ENCODE measurements at regions of chr16 and their contacts with region 1.

Region 1: DNA sequence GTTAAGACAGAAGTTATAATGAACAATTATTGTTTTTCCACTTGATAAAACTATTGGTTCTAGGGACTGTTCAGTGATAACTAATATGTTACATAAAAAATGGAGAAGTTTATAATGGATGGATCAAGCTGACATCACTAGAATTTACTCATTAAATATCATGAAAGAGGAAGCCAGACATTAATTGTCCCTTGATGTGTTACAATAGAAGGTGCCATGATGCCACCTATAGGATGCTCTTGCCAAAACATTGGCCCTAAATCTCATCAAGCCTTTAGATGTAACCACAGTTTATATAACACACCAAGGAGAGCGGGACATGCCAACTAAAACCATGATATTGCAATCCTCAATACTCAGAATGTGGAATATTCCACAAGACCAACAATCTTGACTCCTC is 147.9 kb upstream of the MON1B start:
- DNase-seq: no peak
- H3K4me3 Mint-ChIP-seq: no peak overlapping the region
- H3K27ac Mint-ChIP-seq: no peak overlapping the region
- H3K4me1 Mint-ChIP-seq: no peaks in the 10 kb centered on the region
- H3K27me3 Mint-ChIP-seq: peaks cover 9% of the 10 kb centered on the region

Region 2: GRCh38 chr16:75789237-75789636 is 1253.8 kb before region 1 on chr16:
- CTCF ChIA-PET with region 1: no interaction called
- intact Hi-C with region 1: loop called (anchors 1 kb)
- DNase-seq: no peak
- H3K4me3 Mint-ChIP-seq: no peak overlapping the region
- H3K27ac Mint-ChIP-seq: no peak overlapping the region
- H3K4me1 Mint-ChIP-seq: no peaks in the 10 kb centered on the region
- H3K27me3 Mint-ChIP-seq: peaks cover 3% of the 10 kb centered on the region

Region 3: DNA sequence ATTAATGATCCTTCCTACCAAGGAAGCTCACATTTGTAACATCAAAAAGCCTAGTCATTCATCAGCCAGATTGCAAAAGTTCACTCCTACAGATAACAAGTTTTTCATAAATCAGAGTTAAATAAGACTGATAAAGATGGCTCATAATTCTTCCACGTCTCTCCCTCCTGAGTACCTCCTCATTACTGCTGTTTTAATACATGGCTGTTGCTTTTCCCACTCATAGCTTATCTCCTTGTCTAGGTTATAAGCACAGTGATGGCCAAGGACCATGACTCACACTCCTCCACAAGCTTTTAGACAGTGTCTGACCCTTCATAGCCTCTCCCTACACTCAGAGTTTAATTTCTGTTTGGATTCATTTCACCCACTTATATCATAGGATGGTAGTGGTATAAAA is 47.0 kb after region 1 on chr16:
- CTCF ChIA-PET with region 1: no interaction called
- intact Hi-C with region 1: no loop called
- DNase-seq: no peak
- H3K4me3 Mint-ChIP-seq: no peak overlapping the region
- H3K27ac Mint-ChIP-seq: no peak overlapping the region
- H3K4me1 Mint-ChIP-seq: no peaks in the 10 kb centered on the region
- H3K27me3 Mint-ChIP-seq: no peaks in the 10 kb centered on the region

Measured in activated naive CD4-positive, alpha-beta T cell treated with anti-CD3 and anti-CD28 coated beads for 36 hours (primary cell).